Ascending aorta (tissue), 2 donors: ENCODE measurements at regions of chr10 and their contacts with region 1.

Region 1: DNA sequence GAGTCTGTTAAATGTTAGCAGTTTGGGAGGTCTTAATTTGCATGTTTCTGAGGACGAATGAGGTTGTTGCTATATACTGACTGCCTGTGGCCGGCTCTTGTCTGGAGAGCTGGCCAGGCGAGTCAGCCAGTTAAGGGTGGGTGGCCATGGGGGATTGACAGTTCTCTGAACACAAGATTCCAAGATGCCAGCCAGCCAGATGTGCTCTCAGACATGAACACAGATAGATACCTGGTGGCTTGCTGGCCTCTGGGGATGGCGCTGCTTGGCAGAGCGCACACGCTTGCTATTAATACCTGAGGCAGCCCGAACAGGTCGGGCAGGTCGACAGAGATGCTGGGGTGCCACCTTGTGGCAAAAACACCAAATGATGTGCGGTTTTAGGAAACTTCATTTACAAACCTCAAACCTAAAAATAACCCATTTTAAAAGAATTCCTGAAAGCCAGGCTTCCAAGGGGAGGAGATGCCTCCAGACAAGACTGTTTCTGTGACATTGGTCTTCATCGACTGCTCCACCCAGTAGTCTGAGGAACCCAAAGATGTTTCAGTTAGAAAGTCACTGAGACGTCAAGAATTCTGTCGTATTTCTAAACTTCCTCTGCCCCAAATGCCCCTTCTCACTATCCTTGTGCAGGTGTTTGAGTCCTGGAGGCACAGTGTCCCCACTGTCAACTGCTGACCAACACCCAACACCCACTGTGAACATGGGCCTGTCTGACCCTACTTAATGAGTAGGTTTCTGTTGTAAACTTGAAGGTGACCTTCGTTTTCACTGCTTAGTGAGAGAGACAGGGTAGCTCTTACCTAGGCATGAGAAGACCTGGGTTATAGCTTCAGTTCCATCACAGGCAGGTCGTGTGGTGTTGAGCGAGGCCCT is 123.4 kb downstream of the NT5C2 start:
- DNase-seq: peak in 1 of 2 donors; percentile 82
- H3K4me3 ChIP-seq: no peak overlapping the region
- H3K27ac ChIP-seq: peak overlapping the region in 1 of 2 donors; percentile 47
- H3K4me1 ChIP-seq: no peaks in the 10 kb centered on the region
- H3K27me3 ChIP-seq: no peaks in the 10 kb centered on the region
- CTCF ChIP-seq: peak; percentile 66 to 80 (median 75)

Region 2: DNA sequence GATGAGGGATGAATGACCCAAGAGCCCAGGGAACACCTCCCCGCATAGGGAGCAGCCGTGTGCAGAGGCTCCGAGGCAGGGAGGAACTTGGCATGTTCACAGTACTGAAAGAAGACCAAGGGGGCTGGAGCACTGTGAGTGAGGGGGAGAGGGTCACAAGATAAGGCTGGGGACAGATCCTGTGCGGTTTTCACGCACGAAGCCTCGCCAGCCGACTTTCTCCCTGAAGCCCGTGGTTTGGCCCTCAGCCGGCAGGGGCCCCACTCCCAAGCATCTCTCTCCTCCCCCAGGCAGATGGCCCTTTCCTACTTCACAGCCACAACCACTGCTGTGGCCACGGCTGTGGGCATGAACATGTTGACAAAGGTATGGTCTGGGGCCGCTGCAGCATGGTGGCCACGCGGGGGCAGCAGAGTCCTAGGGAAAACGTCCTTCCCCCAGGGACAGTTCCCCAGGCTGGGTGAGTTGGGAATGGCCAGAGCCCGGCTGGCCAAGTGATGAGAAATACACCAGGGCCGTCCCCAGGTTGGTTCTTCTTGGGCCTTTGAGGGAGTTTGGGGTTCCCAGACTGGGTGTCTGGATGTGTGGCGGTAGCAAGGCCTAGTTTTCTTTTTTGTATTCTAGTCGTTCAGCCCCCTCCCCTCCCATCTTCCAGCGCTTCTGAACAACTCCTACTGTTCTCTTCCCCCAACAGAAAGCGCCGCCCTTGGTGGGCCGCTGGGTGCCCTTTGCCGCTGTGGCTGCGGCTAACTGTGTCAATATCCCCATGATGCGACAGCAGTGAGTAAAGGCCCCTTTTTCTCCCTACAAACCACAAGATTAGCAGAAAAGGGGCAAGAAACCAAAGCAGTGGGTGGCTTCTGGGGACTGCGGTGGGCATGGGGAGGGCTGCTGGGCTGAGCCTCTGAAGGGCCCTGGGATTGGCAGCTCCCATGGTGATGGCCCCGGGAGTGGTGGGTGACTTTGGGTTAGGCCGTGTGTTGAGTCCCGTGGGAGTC is 340.4 kb before region 1 on chr10:
- intact Hi-C with region 1: loop called (anchors 5 kb)
- DNase-seq: peak; percentile 48 to 93
- H3K4me3 ChIP-seq: no peak overlapping the region
- H3K27ac ChIP-seq: no peak overlapping the region
- H3K4me1 ChIP-seq: peaks cover 0 to 7% of the 10 kb centered on the region in 2 donors
- H3K27me3 ChIP-seq: no peaks in the 10 kb centered on the region
- CTCF ChIP-seq: peak; percentile 92 to 94 (median 92)

Region 3: DNA sequence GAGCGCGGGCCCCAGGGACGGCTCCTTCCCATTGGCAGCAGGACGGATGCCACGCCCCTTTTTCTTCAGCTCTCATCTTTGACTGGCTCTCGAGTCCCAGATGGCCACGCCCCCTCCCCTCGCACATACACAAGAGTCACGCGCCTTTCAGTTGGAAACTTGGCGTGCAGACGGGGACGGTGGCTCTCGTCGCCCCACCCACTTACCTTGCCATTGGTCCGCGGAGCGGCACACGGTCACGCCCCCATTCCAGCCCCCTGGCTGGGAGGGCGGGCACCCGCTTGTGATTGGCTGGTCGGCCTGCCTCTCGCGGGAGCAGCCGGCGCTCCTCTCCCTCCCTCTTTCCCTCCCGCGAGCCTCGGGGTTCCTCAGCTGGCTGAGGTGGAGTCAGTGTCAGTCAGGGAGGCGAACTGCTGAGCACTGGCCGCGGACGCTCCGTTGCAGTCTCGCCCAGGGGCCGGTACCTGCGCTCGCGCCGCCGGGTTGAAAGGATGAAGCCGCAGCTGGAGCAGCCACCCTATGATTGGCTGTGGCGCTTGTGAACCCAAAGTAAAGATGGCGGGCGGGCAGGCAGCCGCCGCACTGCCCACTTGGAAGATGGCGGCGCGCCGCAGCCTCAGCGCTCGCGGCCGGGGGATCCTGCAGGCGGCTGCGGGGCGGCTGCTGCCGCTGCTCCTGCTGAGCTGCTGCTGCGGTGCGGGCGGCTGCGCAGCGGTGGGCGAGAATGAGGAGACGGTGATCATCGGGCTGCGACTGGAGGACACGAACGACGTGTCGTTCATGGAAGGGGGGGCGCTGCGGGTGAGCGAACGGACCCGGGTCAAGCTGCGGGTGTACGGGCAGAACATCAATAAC is 151.5 kb before region 1 on chr10 and contains the start of gene CNNM2:
- intact Hi-C with region 1: loop called (anchors 1 kb)
- DNase-seq: peak; percentile 100
- H3K4me3 ChIP-seq: peak within 1 kb of the TSS; percentile 71 to 89
- H3K27ac ChIP-seq: peak within 1 kb of the TSS; percentile 79 to 94
- H3K4me1 ChIP-seq: peaks cover 0 to 7% of the 10 kb centered on the region in 2 donors
- H3K27me3 ChIP-seq: no peaks in the 10 kb centered on the region
- CTCF ChIP-seq: no peak
- total RNA-seq, gene CNNM2: 18.7 TPM

Region 4: GRCh38 chr10:103244663-103245271 is 175.1 kb after region 1 on chr10:
- intact Hi-C with region 1: loop called (anchors 5 kb)
- DNase-seq: peak; percentile 14 to 87
- H3K4me3 ChIP-seq: no peak overlapping the region
- H3K27ac ChIP-seq: no peak overlapping the region
- H3K4me1 ChIP-seq: peaks cover 4 to 11% of the 10 kb centered on the region in 2 donors
- H3K27me3 ChIP-seq: no peaks in the 10 kb centered on the region
- CTCF ChIP-seq: peak; percentile 84 to 92 (median 84)